Left lung (tissue), 14 donors: ENCODE measurements at regions of chr1 and their contacts with region 1.

Region 1: DNA sequence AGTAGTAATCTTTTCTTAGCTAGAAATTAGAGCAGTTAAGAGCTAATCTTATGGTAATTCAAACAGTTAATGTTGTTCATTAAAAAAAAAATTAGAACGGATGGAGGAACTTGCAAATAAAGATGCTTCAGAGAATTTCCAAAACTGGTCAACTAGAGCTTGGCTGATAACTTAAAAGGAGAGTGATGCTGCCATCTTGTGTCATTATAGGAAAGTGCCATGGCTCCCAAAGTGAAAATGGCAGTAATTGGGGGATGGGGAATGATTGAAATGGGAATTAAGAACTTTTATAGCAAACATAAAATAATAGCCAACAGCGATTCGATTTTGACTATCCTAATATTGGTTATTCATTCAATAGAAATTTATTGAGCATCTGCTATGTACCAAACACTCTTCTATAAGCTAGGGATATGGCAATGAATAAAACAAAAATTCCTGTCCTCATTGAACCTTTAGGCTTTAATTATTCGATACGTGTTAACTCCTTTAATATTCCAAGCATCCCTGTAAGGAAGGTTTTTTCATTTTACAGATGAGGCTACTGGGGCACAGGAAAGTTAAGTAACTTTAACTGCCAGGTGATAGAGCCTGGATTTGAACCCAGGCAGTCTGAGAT is 5.7 kb upstream of the PLPP3 start:
- DNase-seq: peak in 2 of 4 donors; percentile 66 to 76
- ATAC-seq: peak; percentile 89
- H3K4me3 ChIP-seq: no peak overlapping the region
- H3K27ac ChIP-seq: no peak overlapping the region
- H3K4me1 ChIP-seq: peaks cover 0 to 4% of the 10 kb centered on the region in 2 donors
- H3K27me3 ChIP-seq: no peaks in the 10 kb centered on the region
- CTCF ChIP-seq: peak; percentile 64 to 86

Region 2: DNA sequence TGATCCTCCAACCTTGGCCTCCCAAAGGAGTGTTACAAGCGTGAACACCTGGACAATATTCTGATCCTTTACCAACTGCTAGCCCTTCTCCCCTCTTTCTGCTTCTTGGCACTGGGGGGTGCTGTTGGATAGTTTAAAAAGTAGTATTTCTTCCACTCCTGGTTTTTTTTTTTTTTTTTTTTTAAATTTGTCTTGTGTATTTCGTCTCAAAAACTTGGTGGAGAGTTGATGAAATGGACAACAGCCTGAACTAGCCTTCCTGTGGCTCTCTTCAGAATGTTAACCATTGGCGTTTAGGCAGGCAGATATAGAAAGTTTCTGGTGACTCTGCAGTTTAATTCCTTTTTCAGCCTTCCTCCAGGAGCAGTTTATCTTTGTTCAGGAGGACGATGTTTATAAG is 1300.2 kb before region 1 on chr1:
- intact Hi-C with region 1: loop called in 1 of 2 experiments (anchors 10 kb)
- DNase-seq: peak in 2 of 4 donors; percentile 51 to 70
- ATAC-seq: peak; percentile 73
- H3K4me3 ChIP-seq: no peak overlapping the region
- H3K27ac ChIP-seq: no peak overlapping the region
- H3K4me1 ChIP-seq: no peaks in the 10 kb centered on the region
- H3K27me3 ChIP-seq: no peaks in the 10 kb centered on the region
- CTCF ChIP-seq: peak; percentile 45 to 63

Region 3: GRCh38 chr1:55375617-55376258 is 1209.3 kb before region 1 on chr1:
- intact Hi-C with region 1: loop called in 1 of 2 experiments (anchors 10 kb)
- DNase-seq: peak in 1 of 4 donors; percentile 65
- ATAC-seq: peak; percentile 81
- H3K4me3 ChIP-seq: no peak overlapping the region
- H3K27ac ChIP-seq: no peak overlapping the region
- H3K4me1 ChIP-seq: no peaks in the 10 kb centered on the region
- H3K27me3 ChIP-seq: no peaks in the 10 kb centered on the region
- CTCF ChIP-seq: peak; percentile 88 to 98

Region 4: GRCh38 chr1:56189946-56190792 is 394.9 kb before region 1 on chr1:
- intact Hi-C with region 1: loop called in 1 of 2 experiments (anchors 5 kb)
- DNase-seq: no peak
- ATAC-seq: peak; percentile 38
- H3K4me3 ChIP-seq: no peak overlapping the region
- H3K27ac ChIP-seq: no peak overlapping the region
- H3K4me1 ChIP-seq: peaks cover 0 to 6% of the 10 kb centered on the region in 2 donors
- H3K27me3 ChIP-seq: no peaks in the 10 kb centered on the region
- CTCF ChIP-seq: peak in 1 of 2 donors; percentile 30